Activated naive CD4-positive, alpha-beta T cell treated with anti-CD3 and anti-CD28 coated beads for 36 hours (primary cell): ENCODE measurements at regions of chr1 and their contacts with region 1.

Region 1: DNA sequence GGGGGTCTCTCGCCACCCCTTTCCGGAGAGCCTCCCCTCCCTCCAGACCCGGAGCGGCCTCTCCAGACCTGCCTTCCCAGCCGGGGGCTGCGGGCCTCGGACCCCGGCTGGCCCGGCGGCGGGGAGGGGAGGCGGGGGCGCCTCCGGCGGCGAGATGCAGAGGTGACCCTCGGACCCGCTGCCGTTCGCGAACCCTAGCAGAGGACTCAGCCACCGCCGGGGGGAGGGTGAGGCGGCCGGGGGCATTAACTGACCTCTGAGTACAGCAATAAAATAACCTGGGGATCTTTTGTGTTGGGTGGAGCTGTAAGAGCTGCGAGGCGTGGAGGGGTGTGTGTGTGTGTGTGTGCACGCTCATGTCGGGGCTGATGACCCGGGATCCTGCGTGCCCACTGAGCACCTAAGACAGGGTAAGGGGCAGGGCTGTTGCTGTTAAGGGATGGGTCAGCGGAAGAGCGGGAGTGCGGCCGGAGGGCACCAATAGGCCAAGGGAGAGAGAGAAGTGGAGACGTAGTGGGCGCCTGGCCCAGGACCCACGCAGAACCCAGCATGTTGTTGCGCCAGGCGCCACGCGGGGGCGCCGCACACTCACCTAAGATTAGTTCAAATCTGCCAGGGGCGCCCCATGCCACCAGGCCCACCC is 6.3 kb downstream of the HAPLN2 start:
- DNase-seq: peak; percentile 65
- H3K4me3 Mint-ChIP-seq: peak overlapping the region; percentile 36
- H3K27ac Mint-ChIP-seq: no peak overlapping the region
- H3K4me1 Mint-ChIP-seq: peaks cover 7% of the 10 kb centered on the region
- H3K27me3 Mint-ChIP-seq: peaks cover 40% of the 10 kb centered on the region

Region 2: GRCh38 chr1:155244368-155245162 is 1381.0 kb before region 1 on chr1:
- CTCF ChIA-PET with region 1: no interaction called
- intact Hi-C with region 1: no loop called
- DNase-seq: peak; percentile 99
- H3K4me3 Mint-ChIP-seq: peak overlapping the region; percentile 88
- H3K27ac Mint-ChIP-seq: peak overlapping the region; percentile 98
- H3K4me1 Mint-ChIP-seq: peaks cover 40% of the 10 kb centered on the region
- H3K27me3 Mint-ChIP-seq: peaks cover 2% of the 10 kb centered on the region

Region 3: DNA sequence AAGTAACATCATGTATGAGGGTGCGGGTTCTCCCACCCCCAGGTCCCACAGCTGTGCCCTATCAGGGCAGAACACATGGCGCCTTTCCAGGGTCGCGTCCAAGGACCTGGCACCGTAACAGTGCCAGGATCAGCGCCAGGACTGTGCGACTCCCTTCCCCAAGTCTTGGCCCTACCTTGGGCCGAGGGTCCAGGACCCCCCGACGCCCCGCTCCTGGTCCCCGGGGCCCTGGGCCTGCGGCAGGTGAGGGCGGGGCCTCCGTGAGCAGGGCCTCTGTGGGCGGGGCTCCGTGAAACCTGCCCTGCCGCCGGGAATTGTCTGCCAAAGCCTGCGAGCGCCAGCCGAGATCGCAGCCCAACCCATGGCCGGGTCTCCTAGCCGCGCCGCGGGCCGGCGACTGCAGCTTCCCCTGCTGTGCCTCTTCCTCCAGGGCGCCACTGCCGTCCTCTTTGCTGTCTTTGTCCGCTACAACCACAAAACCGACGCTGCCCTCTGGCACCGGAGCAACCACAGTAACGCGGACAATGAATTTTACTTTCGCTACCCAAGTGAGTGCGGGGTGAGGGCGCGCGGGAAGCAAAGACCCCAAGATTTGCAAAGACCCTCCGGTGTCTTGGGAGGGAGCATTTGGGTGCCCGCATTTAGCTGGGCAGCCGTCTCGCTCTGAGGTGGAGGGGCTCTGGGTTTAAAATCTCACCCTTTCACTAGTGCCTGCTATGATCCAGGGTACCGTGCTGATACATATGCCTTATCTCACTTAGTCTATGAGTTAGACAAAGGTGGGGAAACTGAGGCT is 256.5 kb before region 1 on chr1 and contains the start of gene RHBG:
- CTCF ChIA-PET with region 1: no interaction called
- intact Hi-C with region 1: no loop called
- DNase-seq: peak; percentile 25
- H3K4me3 Mint-ChIP-seq: peak within 1 kb of the TSS; percentile 54
- H3K27ac Mint-ChIP-seq: no peak within 1 kb of the TSS
- H3K4me1 Mint-ChIP-seq: peaks cover 4% of the 10 kb centered on the region
- H3K27me3 Mint-ChIP-seq: peaks cover 30% of the 10 kb centered on the region
- total RNA-seq, gene RHBG: not detected

Region 4: DNA sequence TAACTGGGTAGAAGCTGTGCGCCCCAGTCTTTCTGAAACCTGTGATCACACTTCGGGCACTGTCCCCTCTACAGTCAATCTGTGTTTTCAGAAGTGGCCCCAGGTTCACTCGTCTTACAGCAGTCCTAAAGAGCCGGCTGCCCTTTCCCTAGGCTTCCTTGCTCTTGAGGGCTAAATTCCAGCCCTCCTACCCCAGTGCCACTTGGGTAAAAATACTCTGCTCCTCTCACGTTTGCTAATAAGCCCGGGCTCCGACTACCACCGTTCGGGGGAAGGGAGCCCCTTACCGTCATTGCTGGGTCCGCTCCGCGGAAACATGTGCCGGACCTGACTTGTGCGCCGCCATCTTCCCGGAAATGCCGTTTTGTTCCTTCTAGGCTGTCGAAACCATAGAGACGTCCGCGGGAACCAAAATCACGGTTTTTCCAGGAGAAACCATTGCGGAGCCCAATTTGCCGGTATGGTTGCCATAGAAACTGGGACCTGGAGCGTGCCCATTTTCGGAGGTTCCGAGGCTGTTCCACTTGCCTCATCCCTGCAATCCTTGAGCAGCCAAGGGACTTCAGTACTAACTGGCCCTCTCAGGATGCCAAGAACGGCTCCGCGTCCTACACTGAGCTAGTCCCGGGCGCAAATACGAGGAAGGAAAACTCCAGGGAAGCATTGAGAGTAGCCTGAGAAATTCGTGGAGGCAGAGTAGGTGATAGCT is 24.3 kb before region 1 on chr1 and contains the start of gene GPATCH4:
- CTCF ChIA-PET with region 1: interaction called, 11 read pairs
- intact Hi-C with region 1: no loop called
- DNase-seq: peak; percentile 89
- H3K4me3 Mint-ChIP-seq: peak within 1 kb of the TSS; percentile 91
- H3K27ac Mint-ChIP-seq: peak within 1 kb of the TSS; percentile 97
- H3K4me1 Mint-ChIP-seq: peaks cover 47% of the 10 kb centered on the region
- H3K27me3 Mint-ChIP-seq: no peaks in the 10 kb centered on the region
- total RNA-seq, gene GPATCH4: 37.5 to 38.3 TPM

Region 5: GRCh38 chr1:156641761-156642264 is 16.3 kb after region 1 on chr1 and contains the start of gene BCAN:
- CTCF ChIA-PET with region 1: interaction called, 12 read pairs
- intact Hi-C with region 1: loop called (anchors 2 kb)
- DNase-seq: peak; percentile 32
- H3K4me3 Mint-ChIP-seq: peak within 1 kb of the TSS; percentile 10
- H3K27ac Mint-ChIP-seq: no peak within 1 kb of the TSS
- H3K4me1 Mint-ChIP-seq: peaks cover 16% of the 10 kb centered on the region
- H3K27me3 Mint-ChIP-seq: peaks cover 78% of the 10 kb centered on the region
- total RNA-seq, gene BCAN: not detected

Region 6: GRCh38 chr1:156677616-156678596 is 52.3 kb after region 1 on chr1:
- CTCF ChIA-PET with region 1: interaction called, 123 read pairs
- intact Hi-C with region 1: loop called (anchors 1 kb)
- DNase-seq: peak; percentile 49
- H3K4me3 Mint-ChIP-seq: no peak overlapping the region
- H3K27ac Mint-ChIP-seq: no peak overlapping the region
- H3K4me1 Mint-ChIP-seq: peaks cover 14% of the 10 kb centered on the region
- H3K27me3 Mint-ChIP-seq: peaks cover 50% of the 10 kb centered on the region

Region 7: GRCh38 chr1:156705918-156706656 is 80.5 kb after region 1 on chr1:
- CTCF ChIA-PET with region 1: interaction called, 21 read pairs
- intact Hi-C with region 1: loop called (anchors 1 kb)
- DNase-seq: peak; percentile 77
- H3K4me3 Mint-ChIP-seq: peak overlapping the region; percentile 76
- H3K27ac Mint-ChIP-seq: peak overlapping the region; percentile 46
- H3K4me1 Mint-ChIP-seq: peaks cover 27% of the 10 kb centered on the region
- H3K27me3 Mint-ChIP-seq: peaks cover 25% of the 10 kb centered on the region